H1 (cell line): ENCODE measurements at regions of chr4 and their contacts with region 1.

Region 1: DNA sequence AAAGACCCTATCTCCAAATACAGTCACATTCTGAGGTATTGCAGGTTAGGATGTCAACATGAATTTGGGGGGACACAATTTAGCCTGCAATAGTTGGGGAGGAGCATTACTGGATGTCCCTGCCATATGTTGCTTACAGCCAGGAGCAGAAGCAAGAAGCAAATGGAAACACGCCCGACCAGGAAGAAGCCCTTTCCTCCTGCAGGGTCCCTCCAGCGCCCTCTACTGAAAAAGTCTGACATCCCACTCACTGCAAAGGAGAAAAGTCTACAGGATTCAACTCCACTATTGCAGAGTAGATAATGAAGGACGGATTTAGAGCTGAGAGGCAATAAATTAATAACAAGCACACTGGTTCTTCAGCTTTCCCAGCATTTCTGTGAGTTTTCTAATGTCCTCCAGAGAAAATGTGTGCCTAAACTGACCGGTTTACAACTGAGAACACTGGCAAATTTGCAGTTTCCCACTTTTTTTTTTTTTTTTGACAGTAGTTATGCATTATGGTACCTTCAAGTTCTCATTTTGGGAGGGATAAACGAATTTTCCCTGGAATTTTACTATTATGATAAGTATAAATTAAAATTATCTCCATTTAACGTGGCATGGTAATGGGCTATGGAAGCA is 31.7 kb downstream of the COQ2 start:
- DNase-seq: peak; percentile 38 to 79
- H3K4me3 ChIP-seq: no peak overlapping the region
- H3K27ac ChIP-seq: no peak overlapping the region
- H3K4me1 ChIP-seq: peaks cover 0 to 4% (median 2%) of the 10 kb centered on the region in 4 experiments; a peak in 3 of 7 replicates
- H3K27me3 ChIP-seq: no peaks in the 10 kb centered on the region
- CTCF ChIP-seq: peak; percentile 64 to 85 (median 80)
- EP300 ChIP-seq: no peak
- POLR2A ChIP-seq: no peak
- RAD21 ChIP-seq: peak; percentile 88 to 91

Region 2: GRCh38 chr4:83074086-83074704 is 178.7 kb before region 1 on chr4:
- CTCF ChIA-PET with region 1: interaction called, 37 read pairs
- POLR2A ChIA-PET with region 1: no interaction called
- DNase-seq: no peak
- H3K4me3 ChIP-seq: no peak overlapping the region
- H3K27ac ChIP-seq: no peak overlapping the region
- H3K4me1 ChIP-seq: no peaks in the 10 kb centered on the region
- H3K27me3 ChIP-seq: no peaks in the 10 kb centered on the region
- CTCF ChIP-seq: peak in 2 of 3 experiments; percentile 62 to 71; a peak in 3 of 4 replicates
- EP300 ChIP-seq: no peak
- POLR2A ChIP-seq: no peak
- RAD21 ChIP-seq: peak; percentile 71 to 76

Region 3: DNA sequence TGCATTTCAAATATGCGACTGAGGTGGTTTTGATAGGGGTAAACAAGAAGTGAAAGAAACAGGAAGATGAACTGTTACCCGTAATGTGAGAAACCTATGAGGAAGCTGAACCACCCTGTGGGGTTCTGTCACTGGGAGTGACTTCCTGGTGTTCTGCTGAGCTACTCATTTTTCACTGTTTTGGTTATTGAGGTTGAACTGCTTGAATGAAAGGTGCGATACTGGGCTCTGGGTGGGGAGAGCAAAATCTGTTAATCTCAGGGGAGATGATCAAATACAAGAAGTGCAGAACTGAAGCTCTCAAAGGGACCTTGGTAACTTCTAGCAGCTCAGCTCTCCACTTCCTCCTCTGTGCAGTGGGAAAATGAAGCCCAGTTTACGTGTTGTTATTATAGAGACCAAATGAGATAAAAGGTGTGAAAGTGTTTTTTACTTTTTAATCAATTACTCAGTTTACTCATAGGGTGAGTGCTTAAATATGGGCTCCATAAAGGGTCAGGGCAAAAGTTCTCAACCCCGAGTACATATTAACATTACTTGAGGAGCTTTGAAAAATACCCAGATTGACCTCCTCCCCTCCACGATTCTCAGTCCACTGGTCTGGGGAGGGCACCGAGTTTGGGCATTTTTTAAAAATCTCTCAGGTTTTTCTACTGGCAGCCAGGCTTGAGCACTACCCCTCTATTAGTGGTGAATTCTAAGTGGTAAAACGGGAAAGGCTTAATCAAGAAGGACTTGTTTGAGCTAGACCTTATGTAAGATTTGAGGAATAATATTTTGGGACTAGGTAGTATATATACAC is 35.0 kb before region 1 on chr4:
- CTCF ChIA-PET with region 1: interaction called, 12 read pairs
- POLR2A ChIA-PET with region 1: no interaction called
- DNase-seq: no peak
- H3K4me3 ChIP-seq: no peak overlapping the region
- H3K27ac ChIP-seq: no peak overlapping the region
- H3K4me1 ChIP-seq: no peaks in the 10 kb centered on the region
- H3K27me3 ChIP-seq: no peaks in the 10 kb centered on the region
- CTCF ChIP-seq: no peak
- EP300 ChIP-seq: no peak
- POLR2A ChIP-seq: no peak
- RAD21 ChIP-seq: no peak

Region 4: GRCh38 chr4:83237591-83237990 is 15.3 kb before region 1 on chr4:
- CTCF ChIA-PET with region 1: interaction called, 23 read pairs
- POLR2A ChIA-PET with region 1: interaction called, 3 read pairs
- DNase-seq: no peak
- H3K4me3 ChIP-seq: no peak overlapping the region
- H3K27ac ChIP-seq: no peak overlapping the region
- H3K4me1 ChIP-seq: no peaks in the 10 kb centered on the region
- H3K27me3 ChIP-seq: no peaks in the 10 kb centered on the region
- CTCF ChIP-seq: no peak
- EP300 ChIP-seq: no peak
- POLR2A ChIP-seq: no peak
- RAD21 ChIP-seq: no peak

Region 5: GRCh38 chr4:83267121-83267829 is 14.4 kb after region 1 on chr4:
- CTCF ChIA-PET with region 1: interaction called, 17 read pairs
- POLR2A ChIA-PET with region 1: interaction called, 8 read pairs
- DNase-seq: no peak
- H3K4me3 ChIP-seq: no peak overlapping the region
- H3K27ac ChIP-seq: no peak overlapping the region
- H3K4me1 ChIP-seq: no peaks in the 10 kb centered on the region
- H3K27me3 ChIP-seq: no peaks in the 10 kb centered on the region
- CTCF ChIP-seq: no peak
- EP300 ChIP-seq: no peak
- POLR2A ChIP-seq: no peak
- RAD21 ChIP-seq: no peak

Region 6: DNA sequence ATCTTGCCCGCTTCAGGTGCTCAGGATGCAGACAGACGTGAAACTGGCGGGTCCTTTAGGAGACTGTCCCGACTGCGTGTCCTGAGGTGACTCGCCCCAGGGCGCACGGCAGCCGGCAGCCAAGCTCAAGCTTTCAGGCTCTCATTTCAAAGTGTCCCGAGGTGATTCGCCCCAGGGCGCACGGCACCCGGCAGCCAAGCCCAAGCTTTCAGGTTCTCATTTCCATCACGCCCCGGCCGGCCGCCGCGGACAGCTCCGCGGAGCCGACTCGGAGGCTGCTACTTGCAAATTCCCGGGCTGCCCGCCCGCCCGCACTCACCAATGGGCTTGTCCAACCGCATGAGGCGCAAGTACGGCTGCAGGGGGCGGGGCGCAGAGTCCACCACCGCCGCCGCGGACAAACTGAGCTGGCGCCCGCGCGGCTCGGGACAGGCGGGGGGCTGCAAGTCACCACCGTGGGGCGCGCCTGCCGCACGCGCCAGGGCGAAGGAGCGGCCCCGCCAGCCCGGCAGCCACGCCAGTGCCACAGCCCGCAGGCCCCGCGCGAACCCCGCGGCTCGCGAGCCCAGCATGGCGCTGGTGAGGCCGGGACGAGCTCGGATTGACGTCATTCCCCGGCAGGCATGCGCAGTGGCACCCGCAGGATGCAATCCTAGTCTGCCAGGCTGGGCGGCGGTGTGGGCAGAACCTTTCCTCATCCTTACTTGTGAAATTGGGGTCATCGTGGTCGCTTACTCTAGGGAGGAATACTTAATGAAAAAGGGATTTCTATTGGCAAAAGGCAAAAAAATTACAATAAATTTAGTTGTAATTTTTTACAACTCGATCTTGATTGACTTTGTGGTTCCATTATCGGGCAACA is 31.5 kb after region 1 on chr4 and contains the start of gene COQ2:
- CTCF ChIA-PET with region 1: interaction called, 12 read pairs
- POLR2A ChIA-PET with region 1: no interaction called
- DNase-seq: peak; percentile 79 to 98
- H3K4me3 ChIP-seq: peak within 1 kb of the TSS; percentile 69 to 79 (median 74)
- H3K27ac ChIP-seq: peak within 1 kb of the TSS; percentile 95
- H3K4me1 ChIP-seq: no peaks in the 10 kb centered on the region; a peak in 1 of 7 replicates
- H3K27me3 ChIP-seq: peaks cover 0 to 8% (median 4%) of the 10 kb centered on the region in 4 experiments; a peak in 6 of 7 replicates
- CTCF ChIP-seq: peak in 2 of 3 experiments; percentile 16 to 21; a peak in 2 of 4 replicates
- EP300 ChIP-seq: peak in 1 of 2 experiments; percentile 74; a peak in 1 of 3 replicates
- POLR2A ChIP-seq: peak; percentile 91 to 94
- RAD21 ChIP-seq: peak in 1 of 2 experiments; percentile 8; a peak in 2 of 4 replicates
- total RNA-seq, gene COQ2: 19.8 and 21.5 TPM in 2 replicates